ENCODE measurements at regions of chr3 and their contacts with region 1.

Region 1: DNA sequence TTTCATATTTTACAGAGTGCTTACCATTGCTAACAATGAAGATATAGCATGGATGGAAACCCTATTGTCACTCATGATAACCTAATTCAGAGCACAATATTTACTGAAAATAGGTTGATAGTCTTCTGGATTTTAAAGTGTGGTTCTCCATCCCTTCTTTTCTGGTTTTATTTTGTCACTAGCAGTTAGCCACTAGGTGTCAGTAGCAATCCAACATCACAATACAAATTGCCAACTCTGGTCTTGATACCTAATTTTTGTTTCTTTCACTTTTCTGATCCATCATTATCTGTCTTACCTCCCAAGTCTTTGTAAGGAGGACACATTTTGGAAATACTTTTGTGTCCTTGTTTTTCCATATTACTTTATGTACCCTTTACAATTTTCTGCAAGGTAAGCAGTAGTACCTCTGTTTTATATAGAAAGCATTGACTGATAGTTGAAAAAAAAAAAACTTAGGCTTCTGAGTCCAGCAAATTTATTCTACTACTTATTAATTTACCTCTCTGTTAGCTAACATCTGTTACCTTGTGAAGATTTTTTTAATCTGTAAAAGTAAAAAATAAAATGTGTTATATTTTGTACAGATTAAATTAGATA is 28.3 kb upstream of the CRYBG3 start:
- DNase-seq: no peak
- ATAC-seq: no peak
- H3K4me3 ChIP-seq: no peak overlapping the region
- H3K27ac ChIP-seq: no peak overlapping the region
- H3K4me1 ChIP-seq: no peaks in the 10 kb centered on the region
- H3K27me3 ChIP-seq: no peaks in the 10 kb centered on the region

Region 2: GRCh38 chr3:97680210-97680609 is 113.3 kb before region 1 on chr3:
- intact Hi-C with region 1: no loop called
- DNase-seq: no peak
- ATAC-seq: no peak
- H3K4me3 ChIP-seq: no peak overlapping the region
- H3K27ac ChIP-seq: no peak overlapping the region
- H3K4me1 ChIP-seq: no peaks in the 10 kb centered on the region
- H3K27me3 ChIP-seq: no peaks in the 10 kb centered on the region

Region 3: DNA sequence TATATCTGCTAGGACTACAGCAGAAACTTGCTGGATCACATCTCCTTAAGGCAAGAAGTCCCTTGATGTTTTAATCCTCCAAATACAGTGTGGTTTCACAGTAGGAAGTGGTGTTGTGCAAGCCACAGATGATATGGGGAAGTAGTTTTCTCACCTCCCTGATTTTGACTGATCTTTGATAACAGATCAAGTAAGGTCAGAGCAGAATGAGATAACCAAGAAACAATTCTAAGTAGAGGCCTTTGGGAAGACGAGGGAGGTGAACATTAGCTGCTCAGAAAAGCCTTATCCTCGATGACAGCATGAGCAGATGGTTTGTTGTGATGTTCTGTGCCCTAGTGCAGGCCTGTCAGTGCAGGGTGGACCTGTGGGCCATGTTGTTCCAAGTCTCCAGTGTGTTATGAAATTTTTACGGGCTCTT is 117.4 kb after region 1 on chr3:
- intact Hi-C with region 1: no loop called
- DNase-seq: peak in 1 of 3 donors; percentile 49
- ATAC-seq: peak; percentile 51 to 80
- H3K4me3 ChIP-seq: no peak overlapping the region
- H3K27ac ChIP-seq: peak overlapping the region; percentile 7
- H3K4me1 ChIP-seq: peaks cover 4% of the 10 kb centered on the region
- H3K27me3 ChIP-seq: no peaks in the 10 kb centered on the region

Region 4: DNA sequence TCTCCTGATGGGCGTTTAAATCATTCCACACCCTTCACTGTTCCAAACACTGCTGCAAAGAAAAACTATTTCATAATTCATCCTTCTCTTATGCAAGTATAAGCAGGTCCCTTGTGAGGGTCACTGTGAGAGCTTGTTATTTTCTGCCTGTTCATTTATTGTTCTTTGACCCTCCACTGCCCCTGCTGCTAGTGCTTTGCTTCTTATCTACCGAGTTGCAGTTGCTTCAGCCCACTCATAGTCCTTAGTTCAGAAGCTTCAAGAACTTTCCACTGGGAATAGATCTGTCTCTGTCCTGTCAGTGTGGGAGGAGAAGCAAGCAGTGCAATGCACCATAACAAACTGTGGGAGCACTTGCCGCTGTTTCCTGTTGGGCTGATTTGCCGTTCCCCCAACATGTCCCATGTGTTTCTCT is 138.9 kb after region 1 on chr3:
- intact Hi-C with region 1: loop called in 1 of 4 experiments (anchors 10 kb)
- DNase-seq: peak in 2 of 3 donors; percentile 14 to 39
- ATAC-seq: peak; percentile 81 to 90
- H3K4me3 ChIP-seq: no peak overlapping the region
- H3K27ac ChIP-seq: no peak overlapping the region
- H3K4me1 ChIP-seq: no peaks in the 10 kb centered on the region
- H3K27me3 ChIP-seq: no peaks in the 10 kb centered on the region

Region 5: DNA sequence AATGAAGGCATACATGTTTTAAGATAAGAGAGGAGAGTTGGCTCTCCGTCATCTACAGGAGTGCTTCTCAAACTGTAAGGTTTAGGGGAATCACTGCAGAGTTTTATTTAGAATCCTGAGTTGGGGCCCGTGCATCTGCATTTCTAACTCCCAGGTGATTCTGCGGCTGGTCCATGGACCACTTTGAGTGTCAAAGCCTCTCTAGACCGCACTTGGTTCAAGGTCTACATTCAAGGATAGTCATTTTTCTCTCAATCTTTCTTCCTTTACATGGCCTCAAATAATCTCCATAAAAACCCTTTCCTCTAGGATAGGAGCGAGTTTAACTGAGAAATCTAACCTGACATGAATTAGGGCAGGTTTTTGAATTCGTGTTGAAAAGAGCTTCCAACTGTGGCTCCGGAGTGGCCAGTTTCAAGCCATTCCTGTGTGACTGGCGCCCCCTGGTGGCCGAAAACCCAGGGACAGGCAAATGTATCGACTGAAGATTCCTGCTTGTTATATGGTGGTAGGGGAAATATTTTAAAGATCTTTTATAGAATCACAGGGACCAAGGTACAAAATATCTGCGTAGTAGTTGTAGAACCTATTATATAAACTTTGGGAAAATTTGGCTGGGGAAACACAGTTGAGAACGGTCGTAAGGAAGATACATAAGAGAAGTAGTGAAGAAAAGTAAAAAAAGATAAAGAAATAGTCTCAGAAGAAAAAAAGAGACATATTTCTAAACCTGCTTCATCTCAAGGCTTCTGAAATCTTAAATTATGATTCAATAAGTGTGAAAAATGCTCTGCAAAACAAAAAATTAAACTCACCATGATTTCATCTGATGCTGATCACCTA is 229.7 kb after region 1 on chr3:
- intact Hi-C with region 1: loop called (anchors 2 to 10 kb)
- DNase-seq: peak; percentile 88 to 97 (median 95)
- ATAC-seq: peak; percentile 84 to 88
- H3K4me3 ChIP-seq: no peak overlapping the region
- H3K27ac ChIP-seq: no peak overlapping the region
- H3K4me1 ChIP-seq: no peaks in the 10 kb centered on the region
- H3K27me3 ChIP-seq: no peaks in the 10 kb centered on the region